Posterior cingulate gyrus (tissue), 11 donors: ENCODE measurements at regions of chr7 and their contacts with region 1.

Region 1: DNA sequence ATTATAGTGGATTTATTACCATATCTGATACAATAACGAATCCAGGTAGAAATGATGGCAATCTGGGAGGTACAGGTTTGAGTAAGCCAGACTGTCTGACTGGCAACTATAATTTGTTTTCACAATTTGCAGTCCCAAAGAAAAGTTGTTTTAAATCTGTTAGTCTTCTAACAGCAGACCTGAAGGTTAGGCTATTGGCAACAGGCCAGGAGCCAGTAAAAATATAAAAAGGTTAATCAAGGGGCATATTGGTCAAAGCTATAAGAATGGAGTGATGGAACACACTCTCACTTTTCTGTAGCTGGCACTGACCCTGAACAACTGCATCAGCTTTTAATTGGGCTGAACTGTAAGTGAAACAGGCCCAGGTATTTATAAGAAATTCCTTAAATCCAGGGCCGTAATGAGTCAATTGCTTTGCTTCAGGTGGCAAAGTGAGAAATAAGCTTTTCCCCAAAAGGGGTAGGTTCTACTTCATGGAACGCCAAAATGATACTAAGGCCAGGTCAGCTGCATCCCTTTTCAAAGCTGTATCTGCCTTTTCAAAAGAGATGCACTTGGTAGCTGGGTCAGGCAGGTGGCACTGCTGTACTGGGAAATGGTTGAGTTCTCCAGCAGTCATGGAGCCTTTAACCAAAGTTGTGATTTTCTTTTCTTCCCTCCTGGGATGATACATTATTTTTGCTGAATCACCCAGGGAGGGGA is 7.0 kb upstream of the GPR22 start:
- DNase-seq: peak; percentile 19 to 93 (median 55)

Region 2: GRCh38 chr7:107394831-107395230 is 68.1 kb before region 1 on chr7:
- intact Hi-C with region 1: no loop called
- DNase-seq: no peak

Region 3: GRCh38 chr7:107725151-107725740 is 262.4 kb after region 1 on chr7:
- intact Hi-C with region 1: loop called (anchors 2 kb)
- DNase-seq: peak in 4 of 10 donors; percentile 16 to 38 (median 28)

Region 4: GRCh38 chr7:107874605-107875446 is 411.9 kb after region 1 on chr7:
- intact Hi-C with region 1: loop called (anchors 2 kb)
- DNase-seq: peak in 2 of 10 donors; percentile 15 to 22